ENCODE measurements at regions of chr21 and their contacts with region 1.

Region 1: GRCh38 chr21:41460578-41461527 is 34.8 kb downstream of the MX1 start:
- DNase-seq: peak; percentile 68 to 89 (median 78)
- ATAC-seq: peak; percentile 80 to 96 (median 92)
- H3K4me3 ChIP-seq: no peak overlapping the region
- H3K27ac ChIP-seq: no peak overlapping the region
- H3K4me1 ChIP-seq: no peaks in the 10 kb centered on the region
- H3K27me3 ChIP-seq: no peaks in the 10 kb centered on the region
- CTCF ChIP-seq: peak; percentile 55 to 78 (median 76)

Region 2: GRCh38 chr21:41196636-41197389 is 264.0 kb before region 1 on chr21:
- intact Hi-C with region 1: no loop called
- DNase-seq: no peak
- ATAC-seq: peak in 3 of 4 donors; percentile 47 to 72 (median 50)
- H3K4me3 ChIP-seq: no peak overlapping the region
- H3K27ac ChIP-seq: peak overlapping the region in 1 of 4 donors; percentile 52
- H3K4me1 ChIP-seq: peaks cover 0 to 7% (median 7%) of the 10 kb centered on the region in 3 donors
- H3K27me3 ChIP-seq: no peaks in the 10 kb centered on the region
- CTCF ChIP-seq: no peak

Region 3: GRCh38 chr21:41283211-41283818 is 177.5 kb before region 1 on chr21:
- intact Hi-C with region 1: loop called in 2 of 3 experiments (anchors 5 to 10 kb)
- DNase-seq: peak in 3 of 6 donors; percentile 50 to 65 (median 53)
- ATAC-seq: peak; percentile 90 to 99 (median 96)
- H3K4me3 ChIP-seq: no peak overlapping the region
- H3K27ac ChIP-seq: no peak overlapping the region
- H3K4me1 ChIP-seq: peaks cover 0 to 5% (median 0%) of the 10 kb centered on the region in 3 donors
- H3K27me3 ChIP-seq: no peaks in the 10 kb centered on the region
- CTCF ChIP-seq: peak; percentile 39 to 70 (median 55)

Region 4: DNA sequence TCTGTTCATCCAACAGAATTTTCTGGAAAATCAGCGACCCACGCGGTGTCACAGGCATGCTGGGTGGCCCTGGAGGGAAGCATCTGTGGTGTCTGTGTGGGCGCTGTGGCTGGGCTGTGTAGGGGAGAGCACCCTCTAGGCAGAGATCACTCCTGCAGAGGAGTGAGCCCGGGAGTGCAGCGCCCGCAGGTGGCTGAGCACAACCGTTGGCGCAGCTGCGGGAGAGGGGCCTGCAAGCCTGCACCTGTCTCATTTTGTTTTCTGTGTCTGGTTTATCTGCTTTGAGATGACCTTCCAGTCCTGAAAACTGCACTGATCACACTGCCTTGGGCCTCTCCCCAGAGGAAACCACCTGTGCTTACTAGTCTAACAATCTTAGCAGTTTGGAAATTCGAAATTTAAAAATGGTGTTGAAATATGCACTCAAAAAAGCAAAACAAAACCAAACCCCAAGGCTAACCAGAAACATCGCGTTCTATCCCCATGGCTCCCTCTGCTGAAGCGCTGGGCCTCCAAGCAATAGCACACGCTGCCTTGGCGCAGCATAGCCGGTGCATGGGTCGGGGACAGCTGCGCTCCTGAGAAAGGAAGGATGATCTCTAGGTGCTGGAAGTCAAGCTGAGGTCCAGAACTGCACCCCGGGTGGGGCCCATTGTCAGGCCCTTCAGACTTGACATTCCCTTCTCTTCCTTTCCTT is 139.5 kb before region 1 on chr21:
- intact Hi-C with region 1: no loop called
- DNase-seq: peak in 1 of 6 donors; percentile 65
- ATAC-seq: peak in 1 of 4 donors; percentile 12
- H3K4me3 ChIP-seq: no peak overlapping the region
- H3K27ac ChIP-seq: peak overlapping the region; percentile 23 to 89 (median 68)
- H3K4me1 ChIP-seq: peaks cover 39 to 68% (median 62%) of the 10 kb centered on the region in 3 donors
- H3K27me3 ChIP-seq: no peaks in the 10 kb centered on the region
- CTCF ChIP-seq: no peak

Region 5: GRCh38 chr21:41361786-41362604 is 98.9 kb before region 1 on chr21 and contains the start of gene MX2:
- intact Hi-C with region 1: loop called in 1 of 3 experiments (anchors 10 kb)
- DNase-seq: peak in 3 of 6 donors; percentile 38 to 55 (median 46)
- ATAC-seq: peak in 3 of 4 donors; percentile 23 to 68 (median 47)
- H3K4me3 ChIP-seq: peak within 1 kb of the TSS in 1 of 4 donors; percentile 19
- H3K27ac ChIP-seq: peak within 1 kb of the TSS; percentile 17 to 65 (median 42)
- H3K4me1 ChIP-seq: peaks cover 0 to under 1% (median 0%) of the 10 kb centered on the region in 3 donors
- H3K27me3 ChIP-seq: no peaks in the 10 kb centered on the region
- CTCF ChIP-seq: no peak
- total RNA-seq, gene MX2: 2.0 to 5.4 (median 4.5) TPM

Region 6: GRCh38 chr21:41406340-41406739 is 54.5 kb before region 1 on chr21:
- intact Hi-C with region 1: no loop called
- DNase-seq: no peak
- ATAC-seq: no peak
- H3K4me3 ChIP-seq: no peak overlapping the region
- H3K27ac ChIP-seq: no peak overlapping the region
- H3K4me1 ChIP-seq: no peaks in the 10 kb centered on the region
- H3K27me3 ChIP-seq: no peaks in the 10 kb centered on the region
- CTCF ChIP-seq: no peak

Region 7: GRCh38 chr21:41630249-41630648 is 169.4 kb after region 1 on chr21:
- intact Hi-C with region 1: no loop called
- DNase-seq: no peak
- ATAC-seq: no peak
- H3K4me3 ChIP-seq: no peak overlapping the region
- H3K27ac ChIP-seq: no peak overlapping the region
- H3K4me1 ChIP-seq: no peaks in the 10 kb centered on the region
- H3K27me3 ChIP-seq: no peaks in the 10 kb centered on the region
- CTCF ChIP-seq: no peak